Naive thymus-derived CD4-positive, alpha-beta T cell (primary cell): ENCODE measurements at regions of chr10 and their contacts with region 1.

Region 1: GRCh38 chr10:22714479-22715289 is at the start of gene PIP4K2A:
- DNase-seq: peak; percentile 64 to 84 (median 77)
- ATAC-seq: peak; percentile 90
- H3K4me3 ChIP-seq: peak within 1 kb of the TSS; percentile 89
- H3K4me3 Mint-ChIP-seq: peak within 1 kb of the TSS; percentile 80 to 97 (median 92)
- H3K27ac ChIP-seq: peak within 1 kb of the TSS; percentile 84
- H3K27ac Mint-ChIP-seq: peak within 1 kb of the TSS; percentile 86 to 93 (median 90)
- H3K4me1 ChIP-seq: peaks cover 12 to 22% of the 10 kb centered on the region in 2 donors
- H3K4me1 Mint-ChIP-seq: peaks cover 25 to 38% (median 35%) of the 10 kb centered on the region in 7 donors
- H3K27me3 ChIP-seq: no peaks in the 10 kb centered on the region
- H3K27me3 Mint-ChIP-seq: peaks cover 0 to 6% (median 0%) of the 10 kb centered on the region in 5 donors
- total RNA-seq, gene PIP4K2A: 110 to 152 (median 140) TPM

Region 2: GRCh38 chr10:22003079-22003913 is 711.4 kb before region 1 on chr10 and contains the start of gene DNAJC1:
- CTCF ChIA-PET with region 1: no interaction called
- POLR2A ChIA-PET with region 1: no interaction called
- intact Hi-C with region 1: loop called (anchors 2 to 5 kb)
- DNase-seq: peak; percentile 94 to 99 (median 97)
- ATAC-seq: peak; percentile 97
- H3K4me3 ChIP-seq: peak within 1 kb of the TSS; percentile 87
- H3K4me3 Mint-ChIP-seq: peak within 1 kb of the TSS; percentile 81 to 99 (median 94)
- H3K27ac ChIP-seq: peak within 1 kb of the TSS; percentile 82
- H3K27ac Mint-ChIP-seq: peak within 1 kb of the TSS; percentile 78 to 94 (median 92)
- H3K4me1 ChIP-seq: peaks cover 18 to 19% of the 10 kb centered on the region in 2 donors
- H3K4me1 Mint-ChIP-seq: peaks cover 7 to 42% (median 29%) of the 10 kb centered on the region in 7 donors
- H3K27me3 ChIP-seq: no peaks in the 10 kb centered on the region
- H3K27me3 Mint-ChIP-seq: peaks cover 0 to 15% (median 4%) of the 10 kb centered on the region in 5 donors
- total RNA-seq, gene DNAJC1: 11.0 to 23.9 (median 12.1) TPM

Region 3: GRCh38 chr10:22325272-22326144 is 389.2 kb before region 1 on chr10:
- CTCF ChIA-PET with region 1: no interaction called
- POLR2A ChIA-PET with region 1: no interaction called
- intact Hi-C with region 1: loop called in 1 of 2 experiments (anchors 10 kb)
- DNase-seq: peak; percentile 64 to 85 (median 80)
- ATAC-seq: peak; percentile 59
- H3K4me3 ChIP-seq: peak overlapping the region; percentile 44
- H3K4me3 Mint-ChIP-seq: peak overlapping the region; percentile 80 to 94 (median 88)
- H3K27ac ChIP-seq: peak overlapping the region; percentile 72
- H3K27ac Mint-ChIP-seq: peak overlapping the region; percentile 73 to 95 (median 93)
- H3K4me1 ChIP-seq: peaks cover 6 to 17% of the 10 kb centered on the region in 2 donors
- H3K4me1 Mint-ChIP-seq: peaks cover 17 to 43% (median 38%) of the 10 kb centered on the region in 7 donors
- H3K27me3 ChIP-seq: peaks cover 0 to 5% of the 10 kb centered on the region in 2 donors
- H3K27me3 Mint-ChIP-seq: peaks cover 6 to 50% (median 36%) of the 10 kb centered on the region in 5 donors

Region 4: DNA sequence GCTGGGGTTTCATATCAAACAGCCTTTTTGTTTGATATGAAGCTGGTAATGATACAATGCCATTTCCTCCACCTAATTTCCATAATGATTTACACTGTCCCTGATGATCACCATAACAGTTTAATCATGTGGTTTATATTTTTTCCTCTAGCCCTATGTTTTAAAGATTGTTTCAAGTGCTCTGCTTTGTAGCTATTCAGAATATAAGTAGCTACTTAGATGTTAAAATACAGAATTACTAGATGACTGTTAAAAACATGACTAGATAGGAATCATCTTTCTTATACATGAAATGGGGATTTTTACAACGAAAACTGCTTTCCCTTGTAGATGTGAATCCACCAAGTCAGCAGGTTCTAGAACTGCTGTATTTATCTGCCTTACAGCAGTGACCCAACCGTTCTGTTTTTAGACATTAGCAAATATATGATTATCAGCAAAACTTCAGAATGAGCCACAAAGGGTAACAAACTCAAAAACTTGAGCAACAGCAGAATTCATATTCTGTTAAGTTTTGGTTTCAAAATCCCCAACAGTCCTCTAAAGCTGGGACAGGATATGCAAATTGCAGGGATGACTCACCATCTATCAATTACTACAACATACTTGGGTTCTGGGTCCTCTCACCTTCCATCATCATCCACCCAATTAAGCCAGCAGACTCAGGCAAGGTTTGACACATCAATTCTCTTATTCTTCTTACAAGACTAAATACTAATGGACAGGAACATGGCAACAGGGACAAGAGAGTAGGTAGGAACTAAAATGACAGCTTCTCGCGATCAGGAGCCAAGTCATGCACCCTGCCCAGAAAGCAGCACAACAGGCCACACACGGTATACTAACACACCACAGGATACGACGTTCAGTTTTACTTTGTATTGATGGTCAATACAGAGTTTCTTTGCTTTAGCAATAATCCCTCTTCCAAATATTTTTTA is 84.2 kb before region 1 on chr10:
- CTCF ChIA-PET with region 1: no interaction called
- POLR2A ChIA-PET with region 1: interaction called, 3 read pairs
- intact Hi-C with region 1: loop called (anchors 1 to 5 kb)
- DNase-seq: peak in 6 of 9 donors; percentile 27 to 73 (median 38)
- ATAC-seq: peak; percentile 89
- H3K4me3 ChIP-seq: peak overlapping the region; percentile 37
- H3K4me3 Mint-ChIP-seq: peak overlapping the region; percentile 3 to 85 (median 72)
- H3K27ac ChIP-seq: peak overlapping the region; percentile 68
- H3K27ac Mint-ChIP-seq: peak overlapping the region; percentile 68 to 98 (median 90)
- H3K4me1 ChIP-seq: peaks cover 66 to 97% of the 10 kb centered on the region in 2 donors
- H3K4me1 Mint-ChIP-seq: peaks cover 65 to 100% (median 98%) of the 10 kb centered on the region in 7 donors
- H3K27me3 ChIP-seq: no peaks in the 10 kb centered on the region
- H3K27me3 Mint-ChIP-seq: no peaks in the 10 kb centered on the region

Region 5: GRCh38 chr10:22666287-22667092 is 48.2 kb before region 1 on chr10:
- CTCF ChIA-PET with region 1: interaction called, 5 read pairs
- POLR2A ChIA-PET with region 1: interaction called, 71 read pairs
- intact Hi-C with region 1: loop called (anchors 1 to 5 kb)
- DNase-seq: peak in 8 of 9 donors; percentile 49 to 91 (median 86)
- ATAC-seq: peak; percentile 96
- H3K4me3 ChIP-seq: peak overlapping the region; percentile 57
- H3K4me3 Mint-ChIP-seq: peak overlapping the region; percentile 78 to 97 (median 84)
- H3K27ac ChIP-seq: peak overlapping the region; percentile 59
- H3K27ac Mint-ChIP-seq: peak overlapping the region; percentile 74 to 97 (median 92)
- H3K4me1 ChIP-seq: peaks cover 68 to 75% of the 10 kb centered on the region in 2 donors
- H3K4me1 Mint-ChIP-seq: peaks cover 34 to 96% (median 89%) of the 10 kb centered on the region in 7 donors
- H3K27me3 ChIP-seq: no peaks in the 10 kb centered on the region
- H3K27me3 Mint-ChIP-seq: no peaks in the 10 kb centered on the region

Region 6: DNA sequence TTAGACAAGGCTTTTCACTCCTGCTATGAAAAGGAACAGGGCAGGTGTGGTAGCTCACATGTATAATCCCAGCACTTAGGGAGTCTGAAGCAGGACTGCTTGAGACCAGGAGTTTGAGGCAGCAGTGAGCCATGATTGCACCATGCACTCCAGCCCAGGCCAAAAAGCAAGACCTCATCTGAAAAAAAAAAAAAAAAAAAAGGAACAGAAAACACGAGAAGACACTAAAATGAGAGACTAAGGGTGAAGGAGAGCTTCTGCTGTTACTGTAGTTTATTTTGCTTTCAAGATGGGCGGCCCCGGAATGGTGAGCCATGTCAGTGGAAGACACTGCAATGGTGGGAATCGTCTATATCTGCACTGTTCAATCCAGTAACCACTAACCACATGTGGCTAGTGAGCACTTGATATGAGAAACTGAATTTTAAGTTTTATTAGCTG is 10.2 kb before region 1 on chr10:
- CTCF ChIA-PET with region 1: no interaction called
- POLR2A ChIA-PET with region 1: interaction called, 8 read pairs
- intact Hi-C with region 1: loop called in 1 of 2 experiments (anchors 1 kb)
- DNase-seq: no peak
- ATAC-seq: peak; percentile 33
- H3K4me3 ChIP-seq: no peak overlapping the region
- H3K4me3 Mint-ChIP-seq: peak overlapping the region in 9 of 10 donors; percentile 14 to 70 (median 60)
- H3K27ac ChIP-seq: peak overlapping the region; percentile 30
- H3K27ac Mint-ChIP-seq: peak overlapping the region in 8 of 9 donors; percentile 29 to 92 (median 82)
- H3K4me1 ChIP-seq: peaks cover 59 to 93% of the 10 kb centered on the region in 2 donors
- H3K4me1 Mint-ChIP-seq: peaks cover 80 to 100% (median 99%) of the 10 kb centered on the region in 7 donors
- H3K27me3 ChIP-seq: no peaks in the 10 kb centered on the region
- H3K27me3 Mint-ChIP-seq: no peaks in the 10 kb centered on the region

Region 7: DNA sequence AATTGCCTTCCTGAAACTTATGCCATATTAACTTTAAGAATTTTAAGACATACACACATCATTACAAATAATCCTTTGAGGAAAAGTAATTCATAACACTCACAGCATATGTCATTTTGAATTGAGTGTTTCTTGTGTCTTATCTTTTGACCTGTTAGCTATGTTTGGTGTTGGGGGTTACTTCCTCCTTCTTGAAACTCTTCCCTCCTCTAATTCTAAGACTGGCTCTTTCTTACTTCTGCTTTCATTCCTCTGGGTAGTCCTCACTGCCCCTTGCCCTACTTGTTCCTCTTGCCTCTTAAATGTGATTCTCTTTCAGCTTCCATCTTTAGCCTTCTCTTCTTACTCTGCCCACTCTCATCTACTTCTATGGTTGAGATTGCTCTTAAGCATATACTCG is 28.0 kb after region 1 on chr10:
- CTCF ChIA-PET with region 1: no interaction called
- POLR2A ChIA-PET with region 1: no interaction called
- intact Hi-C with region 1: no loop called
- DNase-seq: no peak
- ATAC-seq: peak; percentile 68
- H3K4me3 ChIP-seq: no peak overlapping the region
- H3K4me3 Mint-ChIP-seq: no peak overlapping the region
- H3K27ac ChIP-seq: no peak overlapping the region
- H3K27ac Mint-ChIP-seq: no peak overlapping the region
- H3K4me1 ChIP-seq: no peaks in the 10 kb centered on the region
- H3K4me1 Mint-ChIP-seq: peaks cover 0 to 7% (median 0%) of the 10 kb centered on the region in 7 donors
- H3K27me3 ChIP-seq: no peaks in the 10 kb centered on the region
- H3K27me3 Mint-ChIP-seq: peaks cover 0 to 12% (median 0%) of the 10 kb centered on the region in 5 donors